Activated CD4-positive, alpha-beta T cell treated with anti-CD3 and anti-CD28 coated beads, Interleukin-2, amount 10 ng/mL, durations not matched to agents 7 days and 5 days (primary cell): ENCODE measurements at regions of chr20 and their contacts with region 1.

Region 1: DNA sequence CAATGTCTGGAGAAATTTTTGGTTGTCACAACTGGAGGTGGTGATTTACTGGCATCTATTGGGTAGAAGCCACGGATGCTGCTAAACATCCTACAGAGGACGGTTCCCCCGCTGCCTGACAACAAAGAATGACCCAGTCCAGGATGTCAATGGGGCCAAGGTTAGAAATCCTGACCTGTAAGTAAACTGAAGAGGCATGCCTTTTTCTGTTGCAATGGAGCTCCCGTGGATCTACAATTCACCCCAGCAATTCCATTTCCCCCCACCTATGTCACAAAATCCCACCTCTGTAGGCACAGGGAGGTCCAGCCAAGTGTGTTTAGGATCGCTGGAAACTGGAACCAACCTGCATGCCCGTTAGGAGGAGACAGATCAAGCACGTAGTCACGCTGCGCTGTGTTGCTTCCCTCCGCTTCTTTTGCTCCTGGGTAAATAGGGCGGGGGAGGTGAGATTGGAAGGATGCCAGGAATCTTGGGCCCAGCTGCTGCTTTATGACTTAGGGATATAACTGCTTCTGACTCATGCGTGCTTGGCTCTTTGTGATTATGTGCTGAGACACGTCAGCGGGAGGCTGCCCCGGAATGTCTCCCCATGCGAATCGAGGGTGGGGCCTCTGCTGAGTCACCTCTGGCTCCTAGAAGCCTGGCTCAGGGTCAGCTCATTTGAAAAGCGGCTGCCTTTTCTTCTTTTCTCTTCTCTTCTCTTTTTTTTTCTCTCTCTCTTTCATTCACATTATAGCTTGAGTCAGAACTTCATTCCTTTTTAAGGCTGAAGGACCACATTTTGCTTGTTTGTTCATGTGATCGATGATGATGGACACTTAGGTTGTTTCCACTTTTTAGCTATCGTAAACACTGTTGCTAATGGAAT is 12.4 kb upstream of the PEDS1 start:
- DNase-seq: peak; percentile 72
- H3K4me3 Mint-ChIP-seq: peak overlapping the region; percentile 32
- H3K27ac Mint-ChIP-seq: peak overlapping the region; percentile 85
- H3K4me1 Mint-ChIP-seq: peaks cover 14% of the 10 kb centered on the region
- H3K27me3 Mint-ChIP-seq: peaks cover 2% of the 10 kb centered on the region

Region 2: DNA sequence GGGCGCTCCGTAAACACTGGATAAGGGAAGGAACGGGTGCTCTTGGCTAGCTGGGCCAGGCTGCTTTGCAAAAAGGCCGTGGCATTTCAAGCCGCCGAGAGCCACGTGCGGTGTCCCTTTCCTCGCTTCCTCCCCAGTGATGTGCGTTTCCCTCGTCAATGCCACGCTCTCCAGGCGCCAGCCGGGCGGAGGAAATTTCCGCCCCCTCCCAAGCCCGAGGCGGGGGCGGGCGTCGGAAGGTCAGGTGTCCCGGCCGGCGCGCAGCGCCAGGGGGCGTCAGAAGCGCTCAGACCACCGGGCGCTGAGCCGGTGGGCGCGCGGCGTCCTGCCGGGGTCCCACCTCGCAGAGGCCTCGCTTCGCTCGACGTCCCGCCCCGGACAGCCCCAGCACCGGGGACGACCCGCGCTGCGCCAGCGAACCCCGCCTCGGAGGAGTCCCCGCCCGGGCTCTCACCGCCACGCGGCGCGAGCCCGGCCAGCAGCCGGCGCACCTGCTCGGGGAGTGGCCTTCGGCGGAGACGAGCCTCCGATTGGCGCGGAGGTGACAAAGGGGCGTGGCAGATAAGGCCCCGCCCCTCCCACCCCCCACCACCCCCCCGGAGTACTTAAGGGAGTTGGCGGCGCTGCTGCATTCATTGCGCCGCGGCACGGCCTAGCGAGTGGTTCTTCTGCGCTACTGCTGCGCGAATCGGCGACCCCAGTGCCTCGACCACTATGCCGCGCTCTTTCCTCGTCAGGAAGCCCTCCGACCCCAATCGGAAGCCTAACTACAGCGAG is 183.4 kb before region 1 on chr20 and contains the start of gene SNAI1:
- CTCF ChIA-PET with region 1: interaction called, 17 read pairs
- POLR2A ChIA-PET with region 1: interaction called, 4 read pairs
- DNase-seq: peak; percentile 87
- H3K4me3 Mint-ChIP-seq: peak within 1 kb of the TSS; percentile 56
- H3K27ac Mint-ChIP-seq: peak within 1 kb of the TSS; percentile 60
- H3K4me1 Mint-ChIP-seq: peaks cover 24% of the 10 kb centered on the region
- H3K27me3 Mint-ChIP-seq: peaks cover 21% of the 10 kb centered on the region
- total RNA-seq, gene SNAI1: 0.15 TPM in 1 of 2 experiments, not detected in the other

Region 3: DNA sequence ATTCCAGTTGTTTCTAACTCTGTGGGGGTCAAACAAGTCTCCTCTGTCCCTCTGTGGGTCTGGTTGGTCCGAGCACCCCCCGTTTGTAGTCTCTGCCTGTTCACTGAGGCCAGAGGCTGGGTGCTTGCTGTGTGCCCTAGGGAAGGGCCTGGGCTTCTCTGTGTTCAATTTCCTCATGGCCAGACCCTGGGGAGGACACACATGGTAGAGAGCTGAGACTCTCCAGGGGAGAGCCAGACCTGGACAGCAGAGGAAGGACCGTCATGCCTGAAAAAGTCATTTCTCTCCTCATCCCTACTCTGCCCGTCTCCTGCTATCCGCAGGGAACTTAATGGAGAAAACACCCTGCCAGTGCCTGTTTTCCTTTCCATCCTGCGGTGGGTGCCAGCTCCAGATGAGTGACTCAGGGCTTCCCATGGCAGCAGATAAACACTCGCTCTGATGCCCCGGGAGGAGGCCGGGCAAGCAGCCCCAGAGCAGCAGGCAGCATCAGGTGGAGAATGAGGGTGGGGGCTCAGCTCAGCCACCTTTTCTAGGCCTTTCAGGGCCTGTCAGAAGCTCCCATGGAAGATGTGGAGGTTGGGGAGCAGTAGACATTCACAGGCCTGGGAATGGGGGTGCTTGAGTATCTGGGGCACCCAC is 131.2 kb before region 1 on chr20:
- CTCF ChIA-PET with region 1: no interaction called
- POLR2A ChIA-PET with region 1: no interaction called
- DNase-seq: no peak
- H3K4me3 Mint-ChIP-seq: no peak overlapping the region
- H3K27ac Mint-ChIP-seq: no peak overlapping the region
- H3K4me1 Mint-ChIP-seq: no peaks in the 10 kb centered on the region
- H3K27me3 Mint-ChIP-seq: no peaks in the 10 kb centered on the region

Region 4: DNA sequence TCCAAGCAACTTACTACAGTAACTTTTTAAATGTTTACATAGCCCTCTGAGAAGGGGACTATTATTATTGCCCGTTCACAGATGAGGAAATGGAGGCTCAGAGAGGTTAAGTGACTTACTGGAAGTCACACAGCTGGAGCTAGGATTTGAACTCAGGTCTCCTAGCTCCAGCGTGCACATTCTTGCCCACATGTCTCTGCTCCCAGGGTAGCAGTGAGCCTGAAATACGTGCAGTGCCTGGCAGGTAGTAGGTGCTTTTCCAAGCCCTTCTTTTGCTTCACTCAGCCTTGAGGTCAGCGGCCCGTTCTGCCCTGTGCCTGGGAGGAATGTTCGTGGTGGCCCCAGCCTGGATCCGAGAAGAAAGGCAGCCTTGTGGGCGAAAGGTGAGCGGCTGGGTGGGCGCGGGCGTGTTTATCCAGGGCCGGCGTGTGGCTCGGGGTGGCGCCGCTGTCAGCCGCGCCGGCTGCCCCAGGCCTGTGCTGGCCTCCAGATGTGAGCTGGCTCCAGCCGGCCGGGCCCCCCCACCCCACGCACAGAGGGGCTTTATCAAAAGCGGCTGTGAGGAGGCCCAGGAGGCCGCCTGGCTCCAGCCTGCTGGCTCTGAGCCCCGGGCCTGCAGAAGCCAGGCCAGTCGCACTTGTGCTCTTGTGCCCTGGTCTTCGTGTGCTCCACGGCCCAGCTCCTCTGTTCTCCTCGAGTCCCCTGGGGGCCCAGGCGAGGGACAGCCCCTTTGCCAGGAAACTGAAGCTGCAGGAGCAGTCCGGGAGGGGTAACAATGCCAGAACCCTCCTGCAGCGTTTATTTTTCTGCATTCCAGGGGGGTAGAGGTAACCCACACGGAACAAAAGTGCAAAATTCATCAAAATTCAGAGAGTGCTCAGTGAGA is 111.0 kb before region 1 on chr20:
- CTCF ChIA-PET with region 1: no interaction called
- POLR2A ChIA-PET with region 1: no interaction called
- DNase-seq: no peak
- H3K4me3 Mint-ChIP-seq: no peak overlapping the region
- H3K27ac Mint-ChIP-seq: no peak overlapping the region
- H3K4me1 Mint-ChIP-seq: no peaks in the 10 kb centered on the region
- H3K27me3 Mint-ChIP-seq: peaks cover 2% of the 10 kb centered on the region

Region 5: DNA sequence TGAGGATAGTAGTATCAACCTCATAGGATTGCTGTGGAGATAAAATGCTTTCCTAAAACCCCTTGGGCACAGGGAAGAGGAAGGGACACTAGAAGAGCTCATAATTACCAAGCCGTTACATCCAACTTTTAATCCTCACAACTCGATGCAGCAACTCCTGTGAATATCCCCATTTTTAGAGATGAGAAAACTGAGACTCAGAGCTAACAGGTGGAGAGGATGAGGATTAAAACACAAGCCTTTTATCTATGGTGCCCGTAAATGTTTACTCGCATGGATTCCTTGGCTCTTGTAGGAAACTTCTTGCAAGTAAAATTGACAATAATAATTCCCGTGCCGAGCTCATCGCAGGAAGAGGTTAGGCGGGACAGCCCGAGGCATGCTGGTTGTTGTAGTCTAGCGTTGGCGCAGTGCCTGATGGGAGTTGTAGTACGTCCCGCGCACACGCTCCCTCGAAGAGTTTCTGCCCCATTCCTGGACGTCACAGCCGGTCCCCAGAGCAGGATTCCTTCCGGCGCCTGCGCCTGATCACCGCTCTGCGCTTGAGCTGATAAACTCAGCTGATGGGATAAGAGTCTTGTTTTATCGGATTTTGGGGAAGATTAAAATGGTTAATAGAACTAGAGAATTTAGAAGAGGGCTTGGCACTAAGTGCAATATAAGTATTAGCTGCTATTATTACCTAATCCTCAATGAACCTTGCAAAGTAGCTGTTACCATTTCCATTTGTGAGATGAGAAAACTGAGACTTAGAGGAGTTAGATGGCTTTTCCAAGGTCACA is 50.1 kb before region 1 on chr20:
- CTCF ChIA-PET with region 1: interaction called, 19 read pairs
- POLR2A ChIA-PET with region 1: interaction called, 3 read pairs
- DNase-seq: peak; percentile 93
- H3K4me3 Mint-ChIP-seq: peak overlapping the region; percentile 81
- H3K27ac Mint-ChIP-seq: peak overlapping the region; percentile 92
- H3K4me1 Mint-ChIP-seq: peaks cover 52% of the 10 kb centered on the region
- H3K27me3 Mint-ChIP-seq: no peaks in the 10 kb centered on the region

Region 6: GRCh38 chr20:50120897-50121693 is 44.8 kb before region 1 on chr20:
- CTCF ChIA-PET with region 1: interaction called, 19 read pairs
- POLR2A ChIA-PET with region 1: interaction called, 3 read pairs
- DNase-seq: peak; percentile 71
- H3K4me3 Mint-ChIP-seq: no peak overlapping the region
- H3K27ac Mint-ChIP-seq: no peak overlapping the region
- H3K4me1 Mint-ChIP-seq: peaks cover 10% of the 10 kb centered on the region
- H3K27me3 Mint-ChIP-seq: no peaks in the 10 kb centered on the region

Region 7: GRCh38 chr20:50153485-50154377 is 12.2 kb before region 1 on chr20 and contains the start of gene PEDS1:
- CTCF ChIA-PET with region 1: interaction called, 32 read pairs
- POLR2A ChIA-PET with region 1: interaction called, 3 read pairs
- DNase-seq: peak; percentile 85
- H3K4me3 Mint-ChIP-seq: peak within 1 kb of the TSS; percentile 90
- H3K27ac Mint-ChIP-seq: peak within 1 kb of the TSS; percentile 91
- H3K4me1 Mint-ChIP-seq: peaks cover 48% of the 10 kb centered on the region
- H3K27me3 Mint-ChIP-seq: no peaks in the 10 kb centered on the region
- total RNA-seq, gene PEDS1: 27.9 to 31.3 TPM

Region 8: DNA sequence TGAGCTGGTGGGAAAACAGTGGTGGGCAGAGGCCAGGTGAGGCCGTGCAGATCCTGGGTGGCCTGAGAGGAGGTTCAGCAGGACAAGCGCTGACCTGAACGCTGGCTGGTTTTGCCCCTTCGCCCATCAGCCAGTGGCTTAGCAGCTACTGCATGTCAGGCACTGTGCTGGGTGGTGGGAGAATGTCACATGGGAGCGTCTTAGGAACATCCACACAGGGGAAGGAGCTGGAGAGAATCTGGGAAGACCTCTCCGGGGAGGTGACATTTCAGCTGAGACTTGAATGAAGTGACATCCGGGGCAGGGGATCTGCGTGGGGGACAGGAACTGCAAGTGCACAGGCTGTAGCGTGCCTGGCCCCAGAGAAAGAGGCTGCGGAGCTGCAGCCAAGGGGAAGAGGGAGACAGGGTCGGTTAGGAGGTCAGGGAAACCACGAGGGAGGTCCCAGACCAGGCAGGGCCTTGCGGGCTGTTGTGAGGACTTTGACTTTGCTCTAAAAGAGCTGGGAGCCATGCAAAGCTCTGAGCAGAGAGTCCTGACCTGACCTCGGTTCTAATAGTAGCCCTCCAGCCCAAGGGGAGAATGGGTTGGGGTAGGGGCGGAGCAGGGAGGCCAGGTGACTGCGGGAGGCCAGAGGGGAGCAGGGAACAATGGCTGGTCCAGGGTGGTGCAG is 187.5 kb after region 1 on chr20:
- CTCF ChIA-PET with region 1: no interaction called
- POLR2A ChIA-PET with region 1: no interaction called
- DNase-seq: no peak
- H3K4me3 Mint-ChIP-seq: no peak overlapping the region
- H3K27ac Mint-ChIP-seq: peak overlapping the region; percentile 26
- H3K4me1 Mint-ChIP-seq: peaks cover 34% of the 10 kb centered on the region
- H3K27me3 Mint-ChIP-seq: peaks cover 2% of the 10 kb centered on the region